WTC11 (cell line): ENCODE measurements at regions of chr10 and their contacts with region 1.

Region 1: GRCh38 chr10:21943633-21944265 is 59.8 kb downstream of the DNAJC1 start:
- DNase-seq: no peak
- ATAC-seq: no peak
- H3K4me3 Mint-ChIP-seq: no peak overlapping the region
- H3K27ac Mint-ChIP-seq: no peak overlapping the region
- H3K4me1 Mint-ChIP-seq: peaks cover 6% of the 10 kb centered on the region
- H3K27me3 Mint-ChIP-seq: no peaks in the 10 kb centered on the region
- CTCF ChIP-seq: no peak

Region 2: GRCh38 chr10:21927631-21928353 is 16.0 kb before region 1 on chr10:
- CTCF ChIA-PET with region 1: no interaction called
- POLR2A ChIA-PET with region 1: no interaction called
- DNase-seq: no peak
- ATAC-seq: no peak
- H3K4me3 Mint-ChIP-seq: no peak overlapping the region
- H3K27ac Mint-ChIP-seq: peak overlapping the region; percentile 10; the same call in 1 of the 2 replicates
- H3K4me1 Mint-ChIP-seq: peaks cover 23% of the 10 kb centered on the region
- H3K27me3 Mint-ChIP-seq: no peaks in the 10 kb centered on the region
- CTCF ChIP-seq: no peak

Region 3: GRCh38 chr10:21954132-21954531 is 10.4 kb after region 1 on chr10:
- CTCF ChIA-PET with region 1: no interaction called
- POLR2A ChIA-PET with region 1: no interaction called
- DNase-seq: no peak
- ATAC-seq: no peak
- H3K4me3 Mint-ChIP-seq: no peak overlapping the region
- H3K27ac Mint-ChIP-seq: no peak overlapping the region
- H3K4me1 Mint-ChIP-seq: peaks cover 14% of the 10 kb centered on the region
- H3K27me3 Mint-ChIP-seq: no peaks in the 10 kb centered on the region
- CTCF ChIP-seq: no peak

Region 4: DNA sequence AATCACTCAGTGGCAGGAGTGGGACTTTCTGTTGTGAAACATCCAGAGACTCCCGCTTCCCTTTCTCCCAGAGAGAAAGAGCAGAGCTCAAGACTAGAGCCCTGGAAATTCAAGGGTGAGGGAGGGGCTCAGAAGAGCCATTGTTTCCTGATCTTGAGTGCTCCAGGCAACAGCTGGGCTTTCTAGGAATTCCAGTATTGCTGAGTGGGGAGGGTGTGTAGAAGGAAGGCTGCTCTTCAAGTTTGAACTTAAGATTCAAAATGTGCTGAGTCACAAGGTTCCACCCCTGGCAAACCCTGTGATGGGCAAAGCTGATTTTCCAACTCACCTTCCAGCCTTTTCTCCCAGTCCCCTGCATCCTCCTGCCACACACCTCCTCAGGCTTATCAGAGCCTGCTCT is 1109.3 kb after region 1 on chr10:
- CTCF ChIA-PET with region 1: no interaction called
- POLR2A ChIA-PET with region 1: interaction called, 10 read pairs
- DNase-seq: peak; percentile 20
- ATAC-seq: peak; percentile 53
- H3K4me3 Mint-ChIP-seq: no peak overlapping the region
- H3K27ac Mint-ChIP-seq: no peak overlapping the region
- H3K4me1 Mint-ChIP-seq: peaks cover 60% of the 10 kb centered on the region
- H3K27me3 Mint-ChIP-seq: peaks cover 5% of the 10 kb centered on the region; the same call in 1 of the 2 replicates
- CTCF ChIP-seq: no peak